ENCODE measurements at regions of chr13 and their contacts with region 1.

Region 1: GRCh38 chr13:95834134-95834765 is 157.3 kb downstream of the DNAJC3 start:
- DNase-seq: peak; percentile 29 to 69 (median 46)
- H3K4me3 ChIP-seq: no peak overlapping the region
- H3K4me3 Mint-ChIP-seq: no peak overlapping the region
- H3K27ac ChIP-seq: no peak overlapping the region
- H3K27ac Mint-ChIP-seq: no peak overlapping the region
- H3K4me1 ChIP-seq: no peaks in the 10 kb centered on the region
- H3K4me1 Mint-ChIP-seq: no peaks in the 10 kb centered on the region
- H3K27me3 ChIP-seq: peaks cover 7% of the 10 kb centered on the region
- H3K27me3 Mint-ChIP-seq: peaks cover 13 to 18% of the 10 kb centered on the region in 2 donors

Region 2: GRCh38 chr13:95596701-95597100 is 237.5 kb before region 1 on chr13:
- CTCF ChIA-PET with region 1: no interaction called
- POLR2A ChIA-PET with region 1: no interaction called
- DNase-seq: no peak
- H3K4me3 ChIP-seq: no peak overlapping the region
- H3K4me3 Mint-ChIP-seq: no peak overlapping the region
- H3K27ac ChIP-seq: no peak overlapping the region
- H3K27ac Mint-ChIP-seq: no peak overlapping the region
- H3K4me1 ChIP-seq: no peaks in the 10 kb centered on the region
- H3K4me1 Mint-ChIP-seq: no peaks in the 10 kb centered on the region
- H3K27me3 ChIP-seq: no peaks in the 10 kb centered on the region
- H3K27me3 Mint-ChIP-seq: peaks cover 11 to 28% of the 10 kb centered on the region in 2 donors

Region 3: GRCh38 chr13:95624020-95624419 is 210.2 kb before region 1 on chr13:
- CTCF ChIA-PET with region 1: interaction called, 73 read pairs
- POLR2A ChIA-PET with region 1: no interaction called
- DNase-seq: peak in 2 of 5 donors; percentile 1 to 12
- H3K4me3 ChIP-seq: no peak overlapping the region
- H3K4me3 Mint-ChIP-seq: no peak overlapping the region
- H3K27ac ChIP-seq: no peak overlapping the region
- H3K27ac Mint-ChIP-seq: no peak overlapping the region
- H3K4me1 ChIP-seq: no peaks in the 10 kb centered on the region
- H3K4me1 Mint-ChIP-seq: no peaks in the 10 kb centered on the region
- H3K27me3 ChIP-seq: peaks cover 4% of the 10 kb centered on the region
- H3K27me3 Mint-ChIP-seq: peaks cover 10 to 33% of the 10 kb centered on the region in 2 donors

Region 4: DNA sequence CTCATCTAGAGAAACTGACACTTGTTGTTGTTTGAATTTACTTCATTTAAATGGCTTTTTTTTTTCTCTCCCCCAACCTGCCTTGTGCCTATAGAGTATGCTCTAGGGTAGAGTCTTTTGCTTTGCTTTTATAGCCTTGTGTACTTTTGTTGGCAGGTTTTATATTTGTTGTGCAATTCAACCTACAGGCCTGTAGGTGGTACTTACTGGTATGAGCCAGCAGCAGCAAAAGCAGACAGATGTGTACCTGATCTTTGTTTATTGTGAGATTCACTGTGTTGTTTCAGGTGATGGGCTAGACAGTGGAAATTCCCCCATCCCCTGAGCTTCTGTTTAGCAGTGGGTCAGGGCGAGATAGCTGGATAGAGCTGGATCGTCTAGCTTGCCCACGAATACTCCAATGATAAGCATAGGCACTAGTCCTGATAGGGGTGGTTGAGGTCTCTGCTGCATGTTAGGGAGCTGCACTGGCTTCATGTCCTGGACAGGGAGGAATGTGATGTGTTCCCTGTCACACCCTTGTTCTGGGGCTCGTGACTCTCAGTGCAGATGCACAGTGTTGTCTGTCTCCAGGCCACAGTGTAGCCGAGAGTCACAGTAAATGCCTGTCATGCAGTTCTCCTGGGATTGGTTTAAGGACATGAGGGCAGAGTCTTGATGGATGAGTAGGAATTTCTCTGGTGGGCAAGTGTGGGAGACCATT is 136.1 kb before region 1 on chr13:
- CTCF ChIA-PET with region 1: no interaction called
- POLR2A ChIA-PET with region 1: no interaction called
- DNase-seq: no peak
- H3K4me3 ChIP-seq: no peak overlapping the region
- H3K4me3 Mint-ChIP-seq: peak overlapping the region in 2 of 7 donors; percentile 9 to 10
- H3K27ac ChIP-seq: no peak overlapping the region
- H3K27ac Mint-ChIP-seq: peak overlapping the region in 3 of 8 donors; percentile 39 to 80 (median 57)
- H3K4me1 ChIP-seq: peaks cover 17% of the 10 kb centered on the region
- H3K4me1 Mint-ChIP-seq: peaks cover 47 to 62% (median 58%) of the 10 kb centered on the region in 3 donors
- H3K27me3 ChIP-seq: no peaks in the 10 kb centered on the region
- H3K27me3 Mint-ChIP-seq: no peaks in the 10 kb centered on the region

Region 5: DNA sequence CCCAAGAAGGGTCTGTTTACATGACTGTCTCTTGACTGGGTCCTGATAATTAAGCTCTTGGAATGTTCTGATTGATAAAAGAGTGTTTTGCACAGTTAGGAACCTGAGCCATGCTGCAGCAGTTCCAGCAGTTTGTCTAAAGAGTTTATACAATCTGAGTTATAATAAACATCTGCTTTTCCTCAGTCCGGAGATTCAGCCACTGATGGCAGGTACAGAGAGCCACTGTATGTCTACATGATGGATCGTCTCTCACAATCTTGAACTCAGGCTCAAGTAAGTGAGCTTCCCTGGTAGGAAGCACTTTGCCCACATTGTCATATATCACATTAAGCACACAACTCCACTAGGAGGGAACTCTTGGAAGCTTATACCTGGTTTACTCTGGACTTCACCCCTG is 134.7 kb after region 1 on chr13:
- CTCF ChIA-PET with region 1: no interaction called
- POLR2A ChIA-PET with region 1: no interaction called
- DNase-seq: no peak
- H3K4me3 ChIP-seq: no peak overlapping the region
- H3K4me3 Mint-ChIP-seq: no peak overlapping the region
- H3K27ac ChIP-seq: no peak overlapping the region
- H3K27ac Mint-ChIP-seq: no peak overlapping the region
- H3K4me1 ChIP-seq: no peaks in the 10 kb centered on the region
- H3K4me1 Mint-ChIP-seq: no peaks in the 10 kb centered on the region
- H3K27me3 ChIP-seq: no peaks in the 10 kb centered on the region
- H3K27me3 Mint-ChIP-seq: no peaks in the 10 kb centered on the region